Heart left ventricle (tissue), 16 donors: ENCODE measurements at regions of chr3 and their contacts with region 1.

Region 1: DNA sequence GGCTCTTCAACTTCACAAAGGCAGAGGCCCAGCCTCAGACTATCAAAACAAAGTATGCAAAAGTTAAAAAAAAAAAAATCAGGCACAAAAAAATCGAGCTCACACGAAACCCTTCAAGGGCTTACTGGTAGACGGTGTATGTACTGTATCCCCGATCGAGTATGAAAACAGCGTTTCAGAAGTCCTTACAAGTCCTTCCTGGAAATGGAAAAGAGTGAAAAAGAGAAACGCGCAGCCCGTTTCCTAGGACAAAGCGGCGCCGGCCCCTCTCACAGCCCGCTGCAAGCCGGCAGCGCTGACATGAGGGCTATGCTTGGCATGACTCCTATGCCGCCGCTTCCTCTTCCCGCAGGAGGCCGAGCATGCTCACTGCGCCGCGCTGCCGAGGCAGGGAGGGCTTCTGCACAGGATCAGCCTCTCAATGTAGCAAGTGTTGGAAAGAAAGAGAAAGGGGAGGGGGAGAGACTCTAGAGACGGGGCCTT is at the start of gene VGLL4:
- DNase-seq: peak; percentile 89 to 95 (median 94)
- ATAC-seq: peak; percentile 89 to 92 (median 91)
- H3K4me3 ChIP-seq: peak within 1 kb of the TSS; percentile 47 to 82 (median 73)
- H3K27ac ChIP-seq: peak within 1 kb of the TSS; percentile 74 to 97 (median 94)
- H3K4me1 ChIP-seq: peaks cover 9 to 37% (median 31%) of the 10 kb centered on the region in 12 donors
- H3K27me3 ChIP-seq: no peaks in the 10 kb centered on the region
- CTCF ChIP-seq: peak in 2 of 12 donors; percentile 36 to 42
- POLR2A ChIP-seq: peak in 1 of 2 donors; percentile 73
- total RNA-seq, gene VGLL4: 24.0 to 40.4 (median 32.6) TPM

Region 2: DNA sequence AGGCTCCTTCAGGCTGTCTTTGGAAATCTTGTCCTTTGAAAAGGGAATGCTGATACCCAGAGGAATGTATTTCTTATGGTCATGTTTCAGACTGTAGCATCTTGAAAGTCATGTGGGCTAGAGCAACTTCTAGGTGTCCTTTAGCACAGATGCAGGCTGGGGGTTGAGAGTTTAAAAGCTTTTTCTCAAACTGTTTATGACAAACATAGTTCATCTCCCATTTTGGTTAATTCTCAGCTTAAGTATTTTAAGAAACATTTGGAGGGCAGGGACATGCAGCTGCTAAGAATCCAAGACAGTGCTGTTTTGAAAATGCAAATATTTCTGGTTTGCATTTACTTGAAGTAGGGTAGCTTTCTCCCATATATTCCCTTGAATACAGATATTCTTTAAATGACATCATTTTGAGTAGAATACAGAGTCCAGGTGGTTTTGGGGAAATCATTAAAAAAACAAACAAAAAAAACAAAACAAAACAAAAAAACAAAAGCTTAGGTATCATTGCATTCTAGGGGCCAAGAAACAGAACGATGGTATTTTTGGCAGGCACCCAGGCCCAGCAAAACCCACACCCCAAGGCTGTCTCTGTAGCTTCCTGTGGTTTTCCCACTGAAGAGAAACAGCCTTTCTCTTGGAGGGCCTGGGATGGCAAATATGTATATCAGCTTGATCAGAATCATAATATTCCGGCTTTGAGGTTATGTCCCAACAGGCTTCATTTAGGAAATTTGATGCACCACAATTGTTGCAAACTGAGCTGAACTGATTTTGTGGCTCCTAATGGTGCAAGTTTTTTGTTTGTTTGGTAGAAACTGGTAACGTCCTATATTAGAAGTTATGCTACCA is 251.4 kb before region 1 on chr3:
- intact Hi-C with region 1: loop called in 1 of 10 experiments (anchors 5 kb)
- DNase-seq: no peak
- ATAC-seq: peak in 2 of 4 donors; percentile 37 to 52
- H3K4me3 ChIP-seq: no peak overlapping the region
- H3K27ac ChIP-seq: peak overlapping the region in 1 of 12 donors; percentile 12
- H3K4me1 ChIP-seq: peaks cover 0 to 32% (median 24%) of the 10 kb centered on the region in 12 donors
- H3K27me3 ChIP-seq: no peaks in the 10 kb centered on the region
- CTCF ChIP-seq: no peak
- POLR2A ChIP-seq: no peak

Region 3: DNA sequence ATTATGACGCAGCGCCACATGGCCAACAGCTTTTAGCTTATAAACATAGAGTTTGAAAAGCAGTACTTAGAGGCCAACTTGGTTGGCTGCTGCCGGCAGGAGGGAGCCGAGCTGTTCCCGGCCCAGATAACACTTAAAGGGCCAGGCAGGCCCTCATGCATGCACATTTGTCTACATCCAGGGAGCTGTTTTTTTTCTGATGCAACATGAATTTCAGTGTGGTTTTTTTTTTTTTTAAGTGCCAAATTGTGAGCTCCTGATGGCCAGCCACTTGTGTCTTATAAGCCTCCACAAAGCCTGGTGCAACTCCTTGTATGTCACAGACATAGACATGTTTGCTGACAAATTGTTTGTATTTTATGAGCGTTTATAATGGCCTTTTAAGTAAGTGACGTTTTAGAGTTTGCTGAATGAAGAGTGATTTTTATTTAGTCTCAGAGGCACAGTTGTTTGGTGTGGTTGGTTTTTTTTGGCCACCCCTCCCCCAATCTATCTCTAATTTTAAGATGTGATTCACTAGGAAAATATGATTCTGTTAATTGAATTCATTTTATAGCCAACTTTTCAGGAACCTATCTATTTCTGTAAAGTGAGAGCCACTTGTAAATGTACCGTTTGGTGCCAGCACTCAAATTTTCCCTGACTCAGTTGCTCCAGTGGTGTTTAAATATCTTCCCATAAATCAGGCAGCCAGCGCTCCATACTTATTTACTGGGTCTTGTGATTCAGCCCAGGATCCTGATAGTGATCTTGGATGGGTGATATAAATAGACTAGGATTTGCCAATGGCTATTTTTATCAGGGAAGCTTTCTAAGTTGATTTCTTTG is 134.3 kb before region 1 on chr3:
- intact Hi-C with region 1: loop called in 3 of 10 experiments (anchors 2 to 5 kb)
- DNase-seq: peak; percentile 68 to 86 (median 78)
- ATAC-seq: peak; percentile 92 to 95 (median 94)
- H3K4me3 ChIP-seq: peak overlapping the region in 4 of 12 donors; percentile 4 to 27 (median 10)
- H3K27ac ChIP-seq: peak overlapping the region; percentile 66 to 94 (median 76)
- H3K4me1 ChIP-seq: peaks cover 8 to 47% (median 40%) of the 10 kb centered on the region in 12 donors
- H3K27me3 ChIP-seq: no peaks in the 10 kb centered on the region
- CTCF ChIP-seq: peak in 6 of 12 donors; percentile 3 to 40 (median 18)
- POLR2A ChIP-seq: no peak

Region 4: DNA sequence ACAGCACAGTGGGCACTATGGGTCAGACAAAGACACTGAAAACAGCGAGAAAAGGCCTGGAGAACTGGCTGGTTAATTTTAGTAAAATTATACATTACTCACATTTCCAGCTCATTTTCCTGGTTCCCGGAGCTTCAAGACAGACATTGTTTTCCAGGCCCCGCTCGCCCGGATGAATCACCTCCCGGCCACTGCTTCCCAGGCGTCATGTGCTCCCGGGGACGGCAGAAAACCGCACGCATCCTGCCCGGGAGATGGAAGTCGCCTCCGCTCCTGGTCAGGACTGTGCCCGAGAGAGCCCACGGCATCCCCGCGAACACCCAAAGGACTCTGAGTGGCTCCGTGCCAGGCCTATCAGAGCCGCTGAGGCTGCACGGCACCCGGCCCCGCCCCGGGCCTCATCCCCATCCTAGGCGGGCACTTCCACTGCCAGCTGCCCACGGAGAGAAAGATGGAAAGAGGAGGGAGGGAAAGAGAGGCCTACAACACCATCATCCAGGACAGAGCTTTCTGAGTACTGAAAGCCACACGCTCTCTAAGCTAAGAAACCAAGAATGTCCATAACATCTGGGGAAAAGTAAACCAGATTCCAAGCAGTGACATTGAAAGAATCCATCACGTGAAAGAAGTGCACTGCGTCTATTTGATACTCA is 75.0 kb before region 1 on chr3:
- intact Hi-C with region 1: loop called in 6 of 10 experiments (anchors 2 to 10 kb)
- DNase-seq: peak; percentile 79 to 90 (median 81)
- ATAC-seq: peak; percentile 37 to 76 (median 68)
- H3K4me3 ChIP-seq: peak overlapping the region in 9 of 12 donors; percentile 22 to 48 (median 32)
- H3K27ac ChIP-seq: peak overlapping the region; percentile 18 to 96 (median 86)
- H3K4me1 ChIP-seq: peaks cover 9 to 82% (median 59%) of the 10 kb centered on the region in 12 donors
- H3K27me3 ChIP-seq: no peaks in the 10 kb centered on the region
- CTCF ChIP-seq: no peak
- POLR2A ChIP-seq: no peak

Region 5: GRCh38 chr3:11591391-11592282 is 52.0 kb before region 1 on chr3:
- intact Hi-C with region 1: loop called in 6 of 10 experiments (anchors 2 to 10 kb)
- DNase-seq: peak in 4 of 5 donors; percentile 50 to 76 (median 64)
- ATAC-seq: peak; percentile 35 to 88 (median 82)
- H3K4me3 ChIP-seq: peak overlapping the region in 5 of 12 donors; percentile 1 to 22 (median 12)
- H3K27ac ChIP-seq: peak overlapping the region; percentile 52 to 84 (median 72)
- H3K4me1 ChIP-seq: peaks cover 26 to 84% (median 73%) of the 10 kb centered on the region in 12 donors
- H3K27me3 ChIP-seq: no peaks in the 10 kb centered on the region
- CTCF ChIP-seq: no peak
- POLR2A ChIP-seq: no peak

Region 6: GRCh38 chr3:12796171-12797123 is 1152.8 kb after region 1 on chr3 and contains the start of gene CAND2:
- intact Hi-C with region 1: no loop called
- DNase-seq: peak; percentile 73 to 90 (median 81)
- ATAC-seq: peak; percentile 51 to 89 (median 87)
- H3K4me3 ChIP-seq: peak within 1 kb of the TSS; percentile 48 to 86 (median 66)
- H3K27ac ChIP-seq: peak within 1 kb of the TSS; percentile 50 to 97 (median 89)
- H3K4me1 ChIP-seq: peaks cover 0 to 54% (median 9%) of the 10 kb centered on the region in 12 donors
- H3K27me3 ChIP-seq: no peaks in the 10 kb centered on the region
- CTCF ChIP-seq: no peak
- POLR2A ChIP-seq: peak; percentile 20 to 49
- total RNA-seq, gene CAND2: 44.6 to 87.5 (median 68.6) TPM